ENCODE measurements at regions of chr18 and their contacts with region 1.

Region 1: GRCh38 chr18:21191596-21192307 is 50.3 kb upstream of the GREB1L start:
- DNase-seq: peak; percentile 37
- H3K4me3 ChIP-seq: no peak overlapping the region
- H3K27ac ChIP-seq: no peak overlapping the region
- H3K4me1 ChIP-seq: no peaks in the 10 kb centered on the region
- H3K27me3 ChIP-seq: no peaks in the 10 kb centered on the region
- CTCF ChIP-seq: peak in 3 of 4 experiments; percentile 32 to 45 (median 44)
- POLR2A ChIP-seq: no peak

Region 2: GRCh38 chr18:21444465-21445023 is 252.8 kb after region 1 on chr18:
- intact Hi-C with region 1: loop called (anchors 5 kb)
- DNase-seq: peak; percentile 11
- H3K4me3 ChIP-seq: no peak overlapping the region
- H3K27ac ChIP-seq: no peak overlapping the region
- H3K4me1 ChIP-seq: no peaks in the 10 kb centered on the region
- H3K27me3 ChIP-seq: no peaks in the 10 kb centered on the region
- CTCF ChIP-seq: peak in 2 of 4 experiments; percentile 43 to 56
- POLR2A ChIP-seq: no peak

Region 3: GRCh38 chr18:21955757-21956652 is 764.3 kb after region 1 on chr18:
- intact Hi-C with region 1: loop called (anchors 10 kb)
- DNase-seq: peak; percentile 66
- H3K4me3 ChIP-seq: no peak overlapping the region
- H3K27ac ChIP-seq: no peak overlapping the region
- H3K4me1 ChIP-seq: no peaks in the 10 kb centered on the region
- H3K27me3 ChIP-seq: no peaks in the 10 kb centered on the region
- CTCF ChIP-seq: peak; percentile 71 to 85 (median 78)
- POLR2A ChIP-seq: no peak

Region 4: DNA sequence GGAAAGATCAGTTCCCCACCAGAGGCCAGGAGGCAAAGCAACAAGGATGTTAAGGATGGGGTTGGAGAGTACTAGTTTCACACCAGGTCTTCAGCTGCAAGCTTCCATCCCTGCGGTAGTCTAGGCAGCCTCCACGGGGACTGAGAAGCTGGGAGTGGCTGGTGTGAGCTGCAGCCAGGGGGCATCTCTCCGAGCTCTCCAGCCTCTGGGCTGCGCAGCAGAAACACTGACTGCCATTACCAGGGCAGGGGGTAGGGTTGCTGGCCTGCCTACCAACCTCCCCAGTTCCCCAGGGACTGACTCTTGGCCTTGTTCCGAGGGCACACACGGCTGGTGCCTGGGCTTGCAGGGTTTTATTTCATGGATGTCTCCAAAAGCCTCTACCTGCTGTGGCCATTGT is 993.5 kb after region 1 on chr18:
- intact Hi-C with region 1: no loop called
- DNase-seq: no peak
- H3K4me3 ChIP-seq: no peak overlapping the region
- H3K27ac ChIP-seq: no peak overlapping the region
- H3K4me1 ChIP-seq: no peaks in the 10 kb centered on the region
- H3K27me3 ChIP-seq: no peaks in the 10 kb centered on the region
- CTCF ChIP-seq: no peak
- POLR2A ChIP-seq: no peak

Measured in prostate gland (tissue), 2 donors.